ENCODE measurements at regions of chr17 and their contacts with region 1.

Region 1: GRCh38 chr17:40541924-40542557 is 23.2 kb downstream of the CCR7 start:
- DNase-seq: peak; percentile 92
- ATAC-seq: peak; percentile 78

Region 2: DNA sequence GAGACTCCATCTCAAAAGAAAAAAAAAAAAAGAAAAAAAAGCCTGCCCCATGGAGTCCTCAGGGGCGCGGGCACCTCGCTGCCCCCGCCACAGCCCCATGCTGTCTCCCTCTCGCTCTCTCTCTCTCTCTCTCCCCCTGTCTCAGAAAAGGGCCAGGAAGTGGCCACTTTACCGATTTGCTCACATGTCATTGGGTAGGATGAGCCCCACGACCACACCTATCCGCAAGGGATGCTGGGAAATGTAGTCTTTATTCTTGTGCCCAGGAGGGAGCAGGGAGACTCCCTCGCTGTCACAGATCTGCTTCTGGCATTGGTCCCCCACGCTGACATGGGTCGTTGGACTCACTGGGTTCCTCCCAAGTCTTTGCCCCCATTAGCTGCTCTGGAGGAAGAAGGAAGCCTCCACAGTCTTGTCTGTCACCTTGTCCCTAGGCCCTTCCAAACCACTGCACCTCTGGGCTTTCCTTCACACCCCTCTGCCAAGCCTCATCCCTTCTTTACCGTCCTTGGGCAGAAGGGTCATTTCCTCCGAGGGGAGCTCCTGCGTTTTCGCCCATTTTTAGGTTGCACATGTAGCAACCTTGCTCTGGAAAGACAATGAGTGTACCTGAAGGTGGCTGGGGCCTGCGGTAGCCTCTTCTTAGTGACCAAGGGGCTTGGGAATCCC is 170.6 kb before region 1 on chr17:
- intact Hi-C with region 1: no loop called
- DNase-seq: no peak
- ATAC-seq: no peak

Region 3: GRCh38 chr17:40553694-40554534 is 11.9 kb after region 1 on chr17:
- intact Hi-C with region 1: loop called (anchors 2 kb)
- DNase-seq: peak; percentile 89
- ATAC-seq: peak; percentile 74

Measured in Right ventricle myocardium inferior (tissue), 1 donor.